ENCODE measurements at regions of chr17 and their contacts with region 1.

Region 1: DNA sequence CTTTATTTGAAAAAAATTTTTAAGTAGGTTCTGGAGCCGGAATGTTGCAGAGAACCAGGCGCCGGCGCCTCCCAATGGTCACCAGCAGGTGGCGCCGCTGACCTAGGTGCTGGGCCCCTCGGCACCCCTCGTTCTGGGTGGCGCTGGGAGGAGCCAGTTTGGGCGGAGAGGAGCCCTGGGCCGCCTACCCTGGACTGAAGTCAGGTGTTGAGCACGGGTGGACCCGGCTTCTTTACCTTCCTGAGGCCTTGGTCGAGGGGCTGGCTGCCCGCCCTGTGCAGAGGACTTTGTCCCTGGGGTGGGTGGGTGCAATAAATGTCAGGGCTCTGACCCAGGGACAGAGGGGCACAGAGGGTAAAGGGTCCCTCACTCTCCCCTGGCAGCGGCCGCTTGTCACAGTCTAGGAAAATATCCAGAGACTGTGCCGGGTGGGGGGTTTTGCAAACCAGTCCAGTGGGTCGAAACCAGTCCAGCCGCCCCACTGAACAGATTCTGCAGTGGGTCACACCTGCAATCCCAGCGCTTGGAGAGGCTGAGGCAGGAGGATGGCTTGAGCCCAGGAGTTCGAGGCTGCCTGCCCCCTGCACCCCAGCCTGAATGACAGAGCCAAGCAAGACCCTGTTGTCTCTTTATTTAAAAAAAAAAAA is 30.1 kb upstream of the TNFRSF13B start:
- DNase-seq: peak; percentile 81 to 88
- ATAC-seq: peak; percentile 84 to 93
- H3K4me3 ChIP-seq: no peak overlapping the region
- H3K27ac ChIP-seq: peak overlapping the region; percentile 77 to 83
- H3K4me1 ChIP-seq: peaks cover 11% of the 10 kb centered on the region
- CTCF ChIP-seq: peak; percentile 99
- EP300 ChIP-seq: no peak
- POLR2A ChIP-seq: no peak
- RAD21 ChIP-seq: peak; percentile 99 to 100

Region 2: GRCh38 chr17:16945663-16946218 is 56.3 kb before region 1 on chr17:
- CTCF ChIA-PET with region 1: no interaction called
- POLR2A ChIA-PET with region 1: no interaction called
- DNase-seq: no peak
- ATAC-seq: peak in 1 of 2 experiments; percentile 18; a peak in 3 of 6 replicates
- H3K4me3 ChIP-seq: no peak overlapping the region
- H3K27ac ChIP-seq: no peak overlapping the region
- H3K4me1 ChIP-seq: peaks cover 15% of the 10 kb centered on the region; the same call in 2 of the 3 replicates
- CTCF ChIP-seq: no peak
- EP300 ChIP-seq: no peak
- POLR2A ChIP-seq: no peak
- RAD21 ChIP-seq: no peak

Region 3: DNA sequence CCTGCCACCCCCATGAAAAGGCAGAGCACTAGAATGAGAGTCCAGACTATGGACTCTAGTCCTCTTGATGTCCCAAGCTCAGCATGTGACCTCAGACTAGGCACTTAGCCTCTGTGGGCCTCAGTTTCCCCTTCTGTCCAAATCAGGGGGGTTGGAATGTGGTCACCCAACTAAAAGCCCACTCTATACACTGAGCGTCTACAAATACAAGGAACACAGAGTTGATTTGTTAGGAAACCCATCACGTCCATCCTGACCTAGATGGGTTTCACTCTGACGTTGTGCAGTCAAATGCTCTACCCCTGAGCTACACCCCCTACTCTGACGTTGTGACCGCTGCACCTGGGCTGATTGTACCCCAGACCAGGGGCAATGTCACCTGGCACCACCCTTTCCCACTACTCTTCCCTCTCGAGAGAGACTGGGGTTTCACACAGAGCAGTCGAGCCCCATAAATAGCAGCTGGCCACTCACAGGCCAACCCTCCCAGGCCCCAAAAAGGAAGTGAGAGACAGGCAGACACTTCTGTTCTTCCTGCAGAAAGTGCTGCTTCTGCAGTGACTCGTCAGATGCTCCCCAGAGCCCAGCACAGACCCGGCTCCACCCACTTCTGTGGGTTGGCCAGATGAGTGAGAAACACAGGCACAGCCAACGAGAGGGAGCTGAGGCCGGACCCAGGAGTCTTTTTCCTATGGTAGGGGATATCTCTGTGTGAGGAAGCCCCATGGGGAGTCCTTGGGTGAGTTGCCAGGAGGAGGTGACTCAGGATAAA is 14.0 kb before region 1 on chr17:
- CTCF ChIA-PET with region 1: interaction called, 55 read pairs
- POLR2A ChIA-PET with region 1: no interaction called
- DNase-seq: peak; percentile 59 to 74
- ATAC-seq: peak; percentile 54 to 78; a peak in 5 of 6 replicates
- H3K4me3 ChIP-seq: no peak overlapping the region
- H3K27ac ChIP-seq: peak overlapping the region in 1 of 2 experiments; percentile 60; a peak in 2 of 6 replicates
- H3K4me1 ChIP-seq: peaks cover 34% of the 10 kb centered on the region
- CTCF ChIP-seq: no peak
- EP300 ChIP-seq: no peak
- POLR2A ChIP-seq: no peak
- RAD21 ChIP-seq: no peak

Region 4: GRCh38 chr17:17055286-17056155 is 53.5 kb after region 1 on chr17:
- CTCF ChIA-PET with region 1: interaction called, 10 read pairs
- POLR2A ChIA-PET with region 1: no interaction called
- DNase-seq: peak in 1 of 2 experiments; percentile 52
- ATAC-seq: peak; percentile 49 to 63; a peak in 4 of 6 replicates
- H3K4me3 ChIP-seq: no peak overlapping the region
- H3K27ac ChIP-seq: peak overlapping the region; percentile 44 to 66; a peak in 5 of 6 replicates
- H3K4me1 ChIP-seq: peaks cover 99% of the 10 kb centered on the region
- CTCF ChIP-seq: no peak
- EP300 ChIP-seq: no peak
- POLR2A ChIP-seq: no peak
- RAD21 ChIP-seq: no peak

Region 5: GRCh38 chr17:17087424-17088015 is 85.5 kb after region 1 on chr17:
- CTCF ChIA-PET with region 1: interaction called, 3 read pairs
- POLR2A ChIA-PET with region 1: interaction called, 10 read pairs
- DNase-seq: no peak
- ATAC-seq: peak; percentile 17 to 21; a peak in 4 of 6 replicates
- H3K4me3 ChIP-seq: no peak overlapping the region
- H3K27ac ChIP-seq: peak overlapping the region in 1 of 2 experiments; percentile 32; a peak in 4 of 6 replicates
- H3K4me1 ChIP-seq: peaks cover 72% of the 10 kb centered on the region
- CTCF ChIP-seq: no peak
- EP300 ChIP-seq: no peak
- POLR2A ChIP-seq: no peak
- RAD21 ChIP-seq: no peak

Region 6: DNA sequence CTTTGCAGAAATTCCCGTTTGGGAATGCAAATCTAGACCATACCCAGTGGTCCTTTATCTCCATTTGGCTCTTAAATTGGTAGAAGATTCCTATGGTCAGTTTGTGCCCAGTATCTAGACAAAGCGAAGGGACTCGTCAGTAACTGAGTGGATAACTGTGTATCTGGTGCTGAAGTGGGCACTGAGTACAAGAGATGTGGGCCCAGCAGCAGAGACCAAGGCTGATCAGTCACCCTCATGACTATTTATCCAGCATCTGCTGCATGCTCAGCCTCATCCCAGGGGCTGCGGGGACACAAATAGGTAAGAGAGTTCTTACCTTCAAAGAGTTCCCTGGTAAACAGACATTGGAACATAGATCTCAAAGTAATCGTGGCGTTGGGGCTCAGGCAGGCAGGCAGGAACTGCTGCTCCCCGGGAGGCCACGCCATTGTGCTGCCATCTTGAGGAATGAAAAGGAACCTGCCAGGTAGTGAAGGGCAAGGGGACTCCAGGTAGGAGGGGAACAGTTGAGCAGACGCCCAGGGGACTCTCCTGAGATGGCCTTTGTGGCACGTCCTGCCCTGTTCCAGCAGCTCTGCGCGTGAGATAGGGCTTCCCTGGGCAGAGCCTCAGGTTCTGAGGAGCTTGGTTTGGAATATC is 311.5 kb after region 1 on chr17:
- CTCF ChIA-PET with region 1: interaction called, 16 read pairs
- POLR2A ChIA-PET with region 1: no interaction called
- DNase-seq: peak; percentile 71 to 85
- ATAC-seq: peak; percentile 90 to 97
- H3K4me3 ChIP-seq: no peak overlapping the region
- H3K27ac ChIP-seq: no peak overlapping the region
- H3K4me1 ChIP-seq: no peaks in the 10 kb centered on the region
- CTCF ChIP-seq: peak; percentile 64
- EP300 ChIP-seq: no peak
- POLR2A ChIP-seq: no peak
- RAD21 ChIP-seq: peak; percentile 74 to 83